ENCODE measurements at regions of chr12 and their contacts with region 1.

Region 1: GRCh38 chr12:49967042-49967776 is 5.5 kb downstream of the AQP5 start:
- DNase-seq: peak; percentile 92 to 96 (median 94)
- ATAC-seq: peak; percentile 90
- H3K4me3 ChIP-seq: peak overlapping the region; percentile 49
- H3K27ac ChIP-seq: peak overlapping the region; percentile 29; the same call in 1 of the 3 replicates
- H3K4me1 ChIP-seq: peaks cover 12 to 26% of the 10 kb centered on the region in 2 experiments; a peak in 4 of 5 replicates
- H3K27me3 ChIP-seq: peaks cover 28 to 70% of the 10 kb centered on the region in 2 experiments; a peak in 4 of 5 replicates
- CTCF ChIP-seq: peak; percentile 83 to 97 (median 94)
- EP300 ChIP-seq: no peak
- POLR2A ChIP-seq: no peak
- RAD21 ChIP-seq: peak; percentile 87 to 93

Region 2: DNA sequence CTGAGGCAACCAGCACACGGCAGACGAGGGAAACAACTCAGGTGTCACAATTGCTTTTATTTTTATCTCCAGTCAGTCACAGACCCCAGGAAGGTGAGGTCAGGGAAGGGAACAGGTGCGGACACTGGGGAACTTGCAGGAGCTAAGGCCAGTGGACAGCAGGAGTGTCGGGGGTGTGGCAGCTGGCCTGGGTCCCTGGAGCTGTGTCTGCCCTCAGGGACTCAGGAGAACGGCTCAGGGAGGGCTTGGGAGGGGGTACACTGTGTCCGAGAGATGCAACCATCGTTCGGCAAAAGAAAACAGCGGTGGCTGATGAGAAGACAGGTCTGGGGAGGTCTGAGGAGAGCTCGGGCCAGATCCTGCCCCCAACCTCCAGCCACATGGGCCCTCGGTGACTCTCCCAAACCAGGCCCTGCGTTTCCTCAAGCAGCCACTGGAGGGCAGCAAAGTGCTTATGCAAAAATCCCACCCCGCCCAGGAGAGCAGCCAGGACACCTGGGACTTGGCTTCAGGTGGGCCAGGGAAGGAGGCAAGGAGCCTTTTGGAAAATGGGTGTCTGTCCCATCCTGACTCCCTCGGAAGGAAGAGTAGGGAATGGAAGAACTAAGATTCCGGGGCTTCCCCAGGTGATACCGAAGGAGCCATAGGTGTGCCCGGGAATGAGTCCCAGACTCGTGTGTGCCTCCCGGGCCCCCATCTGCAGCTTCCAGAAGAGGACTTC is 100.2 kb before region 1 on chr12:
- CTCF ChIA-PET with region 1: no interaction called
- POLR2A ChIA-PET with region 1: no interaction called
- in situ Hi-C with region 1: loop called (anchors 5 kb)
- intact Hi-C with region 1: loop called (anchors 1 kb)
- DNase-seq: peak; percentile 83 to 86 (median 84)
- ATAC-seq: peak; percentile 76
- H3K4me3 ChIP-seq: no peak overlapping the region
- H3K27ac ChIP-seq: no peak overlapping the region
- H3K4me1 ChIP-seq: peaks cover 35 to 40% of the 10 kb centered on the region in 2 experiments
- H3K27me3 ChIP-seq: peaks cover 4 to 19% of the 10 kb centered on the region in 2 experiments; a peak in 2 of 5 replicates
- CTCF ChIP-seq: peak; percentile 89 to 95 (median 94)
- EP300 ChIP-seq: no peak
- POLR2A ChIP-seq: no peak
- RAD21 ChIP-seq: peak; percentile 86 to 87

Region 3: DNA sequence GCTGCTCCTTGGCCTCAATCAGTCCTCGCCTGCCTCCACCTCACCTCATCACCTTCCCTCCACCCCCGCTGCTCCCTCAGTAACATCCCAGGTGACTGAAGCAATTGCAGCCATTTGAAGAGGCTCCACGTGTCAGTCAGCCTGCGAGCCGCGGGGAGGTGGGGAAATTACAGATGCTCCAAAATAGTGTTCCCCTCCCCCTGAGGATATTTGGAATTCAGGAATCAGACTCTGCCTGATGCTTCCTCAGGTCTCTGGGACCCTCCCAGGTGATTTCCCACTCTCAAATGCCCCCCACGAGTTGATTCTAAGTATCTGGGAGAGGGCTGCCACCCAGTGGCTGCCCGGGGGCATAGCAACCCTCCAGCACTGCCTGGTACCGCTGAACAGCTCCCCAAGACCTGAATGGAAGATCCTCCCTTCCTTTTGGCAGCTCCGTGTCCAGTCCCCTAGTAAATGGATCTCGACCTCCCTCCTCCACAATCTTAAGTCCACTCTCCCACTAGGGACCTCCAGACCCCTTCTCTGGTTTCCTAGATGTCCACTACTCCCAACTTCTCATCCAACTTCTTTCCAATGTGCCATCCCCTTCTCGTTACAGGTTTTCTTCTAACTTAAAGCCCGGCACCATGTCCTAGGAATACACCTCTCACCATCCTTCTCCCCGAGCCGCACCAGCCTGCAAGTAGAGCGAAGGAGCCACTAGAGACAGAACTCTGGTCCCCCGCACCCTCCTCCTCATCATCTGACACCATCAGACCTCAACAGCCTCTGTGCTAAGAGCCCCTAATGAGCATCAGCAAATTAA is 88.8 kb after region 1 on chr12:
- CTCF ChIA-PET with region 1: interaction called, 33 read pairs
- POLR2A ChIA-PET with region 1: interaction called, 3 read pairs
- in situ Hi-C with region 1: no loop called
- intact Hi-C with region 1: loop called (anchors 1 kb)
- DNase-seq: peak; percentile 65 to 77 (median 74)
- ATAC-seq: peak; percentile 70
- H3K4me3 ChIP-seq: no peak overlapping the region
- H3K27ac ChIP-seq: no peak overlapping the region
- H3K4me1 ChIP-seq: peaks cover 18 to 38% of the 10 kb centered on the region in 2 experiments
- H3K27me3 ChIP-seq: peaks cover 17 to 60% of the 10 kb centered on the region in 2 experiments; a peak in 4 of 5 replicates
- CTCF ChIP-seq: peak; percentile 88 to 99 (median 93)
- EP300 ChIP-seq: no peak
- POLR2A ChIP-seq: no peak
- RAD21 ChIP-seq: peak; percentile 96 to 97

Region 4: DNA sequence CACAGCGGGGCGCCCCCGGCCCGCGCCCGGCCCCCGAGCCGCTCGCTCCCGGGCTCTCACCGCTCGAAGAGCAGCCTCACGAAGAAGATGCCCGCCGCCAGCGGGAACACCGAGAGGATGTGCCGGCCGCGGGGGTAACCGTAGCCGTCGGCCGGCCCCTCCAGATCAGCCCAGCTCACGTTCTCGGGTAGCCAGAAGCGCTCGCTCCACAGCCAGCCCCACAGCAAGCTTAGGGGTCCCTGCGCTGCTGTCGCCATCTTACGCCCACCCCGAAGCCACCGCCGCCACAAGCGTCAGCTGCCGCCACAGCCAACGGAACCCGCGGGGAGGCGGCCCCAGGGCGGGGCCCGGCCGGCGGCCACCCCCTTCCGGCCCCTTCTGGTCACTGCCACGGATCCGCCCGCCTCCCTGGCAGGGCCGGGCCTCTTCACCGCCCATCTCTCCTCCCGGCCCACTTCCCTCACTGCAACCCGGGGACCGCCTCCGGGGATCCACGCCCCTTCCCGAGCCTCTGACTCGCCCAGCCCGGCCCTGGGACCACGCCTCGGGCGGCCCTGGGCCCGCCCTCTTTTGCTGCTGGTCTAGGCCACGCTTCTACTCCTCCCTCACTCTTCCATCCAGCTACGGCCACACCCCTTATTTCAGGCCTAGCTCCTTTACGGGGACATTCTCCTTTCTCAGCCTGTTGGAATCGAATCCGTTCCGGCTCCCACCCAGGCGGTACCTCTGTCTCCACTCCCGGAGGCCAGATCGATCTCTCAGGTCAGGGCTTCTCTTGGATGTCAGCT is 200.0 kb after region 1 on chr12 and contains the start of gene CERS5:
- CTCF ChIA-PET with region 1: no interaction called
- POLR2A ChIA-PET with region 1: no interaction called
- in situ Hi-C with region 1: loop called (anchors 5 kb)
- intact Hi-C with region 1: no loop called
- DNase-seq: peak; percentile 97 to 99 (median 98)
- ATAC-seq: peak; percentile 99
- H3K4me3 ChIP-seq: peak within 1 kb of the TSS; percentile 97
- H3K27ac ChIP-seq: peak within 1 kb of the TSS; percentile 84
- H3K4me1 ChIP-seq: peaks cover 3 to 28% of the 10 kb centered on the region in 2 experiments; a peak in 4 of 5 replicates
- H3K27me3 ChIP-seq: no peaks in the 10 kb centered on the region
- CTCF ChIP-seq: peak in 2 of 3 experiments; percentile 31 to 49; a peak in 3 of 6 replicates
- EP300 ChIP-seq: no peak
- POLR2A ChIP-seq: peak; percentile 82
- RAD21 ChIP-seq: no peak
- polyA plus RNA-seq, gene CERS5: 6.1 to 8.7 TPM

Measured in K562 (cell line).